A673 (cell line): ENCODE measurements at regions of chr4 and their contacts with region 1.

Region 1: DNA sequence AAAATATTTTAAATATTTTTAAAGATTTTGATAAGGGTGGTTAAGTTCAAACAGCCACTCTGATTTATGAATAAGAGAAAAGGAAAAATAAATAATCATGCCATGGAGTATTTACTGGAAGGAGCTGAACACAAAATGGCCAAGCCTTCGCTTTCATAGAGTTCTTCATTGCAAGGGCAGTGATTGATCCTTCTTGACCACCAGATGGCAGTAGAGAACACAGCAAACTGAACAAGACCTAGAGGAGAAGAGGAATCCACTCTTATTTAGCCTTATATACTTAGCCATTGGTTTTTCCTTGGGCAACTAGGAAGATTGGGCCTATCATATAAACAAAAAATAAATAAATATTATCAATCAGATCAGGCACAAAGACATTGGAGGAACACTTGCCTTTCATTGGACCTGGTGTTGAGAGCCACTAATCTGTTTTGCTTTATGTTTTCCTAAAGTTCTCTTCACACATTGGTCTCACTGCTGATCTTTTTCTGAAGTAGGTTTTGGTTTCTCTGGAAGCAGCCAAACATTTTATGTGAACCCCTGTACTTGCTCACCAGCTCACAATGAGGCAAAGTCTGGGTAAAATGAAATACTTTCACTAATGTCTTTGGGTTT is 58.1 kb upstream of the PARM1 start:
- DNase-seq: peak; percentile 76
- H3K4me3 ChIP-seq: no peak overlapping the region
- H3K27ac ChIP-seq: no peak overlapping the region
- H3K4me1 ChIP-seq: peaks cover 15% of the 10 kb centered on the region
- H3K27me3 ChIP-seq: no peaks in the 10 kb centered on the region
- CTCF ChIP-seq: peak; percentile 70

Region 2: GRCh38 chr4:74228691-74229640 is 645.9 kb before region 1 on chr4:
- CTCF ChIA-PET with region 1: no interaction called
- POLR2A ChIA-PET with region 1: no interaction called
- intact Hi-C with region 1: no loop called
- DNase-seq: peak; percentile 70
- H3K4me3 ChIP-seq: no peak overlapping the region
- H3K27ac ChIP-seq: no peak overlapping the region
- H3K4me1 ChIP-seq: peaks cover 9% of the 10 kb centered on the region
- H3K27me3 ChIP-seq: no peaks in the 10 kb centered on the region
- CTCF ChIP-seq: peak; percentile 74

Region 3: DNA sequence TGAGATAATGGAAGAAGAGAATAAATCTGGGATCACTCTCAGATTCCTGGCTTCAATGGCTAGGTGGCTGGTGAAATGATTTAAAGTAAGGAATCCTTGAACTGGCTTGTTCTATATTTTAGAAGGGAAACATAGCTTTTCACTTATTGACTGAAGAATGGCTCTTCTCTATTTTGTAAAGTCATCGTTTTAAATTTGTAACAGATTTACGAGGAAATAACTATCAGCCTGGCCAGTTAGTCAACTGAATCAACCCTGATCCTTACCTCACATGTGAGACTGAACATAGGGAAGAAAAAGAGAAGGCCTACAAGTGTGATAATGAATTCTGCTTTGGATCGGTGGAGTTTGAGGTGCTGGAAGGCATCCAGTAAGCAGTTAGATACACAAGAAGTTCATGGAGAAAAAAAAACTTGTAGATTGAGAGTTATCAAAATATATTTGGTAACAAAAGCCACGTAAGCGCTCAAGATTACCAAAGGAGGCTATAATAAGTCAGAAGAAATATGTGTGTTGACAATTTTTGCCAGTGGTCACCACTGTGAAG is 417.9 kb before region 1 on chr4:
- CTCF ChIA-PET with region 1: no interaction called
- POLR2A ChIA-PET with region 1: no interaction called
- intact Hi-C with region 1: no loop called
- DNase-seq: no peak
- H3K4me3 ChIP-seq: no peak overlapping the region
- H3K27ac ChIP-seq: no peak overlapping the region
- H3K4me1 ChIP-seq: no peaks in the 10 kb centered on the region
- H3K27me3 ChIP-seq: no peaks in the 10 kb centered on the region
- CTCF ChIP-seq: no peak

Region 4: DNA sequence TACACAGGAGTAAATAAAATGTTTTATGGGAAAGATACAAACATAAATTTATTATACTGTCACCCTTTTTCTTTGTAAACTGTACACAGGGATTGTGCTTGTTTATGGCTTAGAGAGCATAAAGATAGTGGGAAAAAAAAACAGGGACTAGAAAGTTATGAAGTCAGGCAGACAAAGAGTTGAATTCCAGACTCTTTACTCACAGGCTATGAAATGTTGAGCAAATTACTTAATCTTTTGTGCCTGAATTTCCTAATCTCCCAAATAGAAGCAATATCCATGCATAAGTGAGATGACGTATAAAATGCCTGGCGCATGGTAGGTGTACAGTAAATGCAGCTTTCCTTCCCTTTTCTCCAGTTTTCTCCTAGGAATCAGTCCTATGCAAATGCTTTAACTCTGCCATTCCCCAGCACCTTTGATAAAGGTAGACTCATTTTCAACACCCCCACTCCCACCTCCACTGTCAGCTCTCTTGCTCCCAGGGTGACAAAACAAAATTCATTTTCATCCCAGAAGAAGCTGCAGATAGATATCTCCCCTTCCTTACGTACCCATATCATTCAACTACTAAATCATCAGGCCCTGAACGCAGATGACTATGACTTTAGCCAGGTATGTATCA is 36.0 kb before region 1 on chr4:
- CTCF ChIA-PET with region 1: interaction called, 15 read pairs
- POLR2A ChIA-PET with region 1: no interaction called
- intact Hi-C with region 1: no loop called
- DNase-seq: peak; percentile 19
- H3K4me3 ChIP-seq: no peak overlapping the region
- H3K27ac ChIP-seq: no peak overlapping the region
- H3K4me1 ChIP-seq: no peaks in the 10 kb centered on the region
- H3K27me3 ChIP-seq: no peaks in the 10 kb centered on the region
- CTCF ChIP-seq: no peak

Region 5: GRCh38 chr4:74932816-74933561 is 58.1 kb after region 1 on chr4 and contains the start of gene PARM1:
- CTCF ChIA-PET with region 1: no interaction called
- POLR2A ChIA-PET with region 1: no interaction called
- intact Hi-C with region 1: loop called (anchors 2 kb)
- DNase-seq: peak; percentile 79
- H3K4me3 ChIP-seq: peak within 1 kb of the TSS; percentile 52
- H3K27ac ChIP-seq: no peak within 1 kb of the TSS
- H3K4me1 ChIP-seq: no peaks in the 10 kb centered on the region
- H3K27me3 ChIP-seq: no peaks in the 10 kb centered on the region
- CTCF ChIP-seq: peak; percentile 51
- total RNA-seq, gene PARM1: 12.3 and 12.9 TPM in 2 replicates

Region 6: DNA sequence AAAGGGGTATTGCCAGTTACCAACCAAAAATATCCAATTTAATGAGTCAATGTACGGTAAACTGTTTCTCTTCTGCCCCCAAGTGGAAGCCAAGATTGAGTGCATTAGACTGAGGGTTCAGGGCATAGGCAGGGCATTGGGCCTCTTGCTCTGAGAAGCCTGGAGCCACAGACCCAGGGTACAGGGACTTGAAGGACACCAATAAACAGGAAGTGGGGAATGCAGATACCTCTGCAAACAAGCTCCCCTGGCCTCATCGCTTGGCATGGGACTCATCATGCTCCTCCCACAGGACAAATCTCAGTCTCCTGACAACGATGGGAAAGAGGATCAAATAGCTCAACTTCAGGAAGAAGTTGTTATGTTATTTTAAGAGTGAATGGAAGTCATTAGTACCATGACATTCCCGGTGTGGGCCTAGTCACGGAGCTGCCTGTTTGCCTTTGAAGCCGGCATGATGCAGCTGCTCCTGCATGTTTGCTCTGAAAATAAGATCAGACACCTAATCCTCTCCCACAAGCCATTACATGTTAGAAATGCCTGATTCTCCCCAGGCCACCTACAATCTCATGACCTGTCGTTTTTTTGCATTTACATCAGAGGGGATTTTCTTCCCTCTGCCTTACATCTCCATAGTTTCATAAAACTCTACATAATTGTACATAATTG is 415.2 kb after region 1 on chr4:
- CTCF ChIA-PET with region 1: no interaction called
- POLR2A ChIA-PET with region 1: no interaction called
- intact Hi-C with region 1: loop called (anchors 10 kb)
- DNase-seq: peak; percentile 41
- H3K4me3 ChIP-seq: no peak overlapping the region
- H3K27ac ChIP-seq: no peak overlapping the region
- H3K4me1 ChIP-seq: no peaks in the 10 kb centered on the region
- H3K27me3 ChIP-seq: no peaks in the 10 kb centered on the region
- CTCF ChIP-seq: peak; percentile 50